GM13977 (cell line): ENCODE measurements at regions of chr2 and their contacts with region 1.

Region 1: GRCh38 chr2:38315707-38316333 is 61.3 kb downstream of the ATL2 start:
- DNase-seq: peak; percentile 49
- CTCF ChIP-seq: peak; percentile 67

Region 2: DNA sequence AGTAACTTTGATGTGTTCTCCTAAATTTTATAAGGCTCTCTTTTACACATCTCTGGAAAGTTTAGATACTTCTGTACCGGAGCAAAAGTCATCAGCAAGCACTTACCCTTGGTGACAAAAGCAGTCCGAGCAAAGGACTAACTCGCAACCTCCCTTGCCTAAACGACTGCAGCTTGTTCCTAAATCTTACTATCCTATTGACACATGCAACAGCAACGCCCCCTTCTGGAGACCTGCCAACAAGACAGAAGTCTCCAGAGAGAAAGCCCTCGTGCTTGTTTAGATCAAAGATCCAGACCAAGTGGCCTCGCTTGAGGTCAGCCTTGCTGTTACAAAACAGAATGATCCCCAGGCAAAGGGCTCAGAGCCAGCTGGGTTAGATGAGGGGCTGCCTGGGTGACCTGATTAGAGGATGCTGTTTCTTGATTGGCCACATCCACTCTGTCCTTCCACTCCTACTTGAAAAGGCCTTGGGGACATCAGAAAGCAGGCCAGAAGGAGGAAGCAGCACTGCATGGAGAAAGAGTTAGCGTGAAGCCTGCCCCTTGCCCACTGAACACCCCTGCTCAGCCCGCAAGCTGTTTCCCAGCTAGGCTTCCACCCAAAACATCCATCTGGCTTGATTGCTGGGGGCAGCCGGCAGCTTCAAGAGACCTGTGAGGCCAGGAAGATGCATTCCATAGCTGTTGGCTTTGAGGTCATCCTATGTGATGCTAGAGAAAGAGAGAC is 192.7 kb after region 1 on chr2:
- in situ Hi-C with region 1: loop called (anchors 10 kb)
- DNase-seq: peak; percentile 77
- CTCF ChIP-seq: peak; percentile 88

Region 3: GRCh38 chr2:38740851-38741731 is 425.3 kb after region 1 on chr2:
- in situ Hi-C with region 1: loop called (anchors 25 kb)
- DNase-seq: peak; percentile 35
- CTCF ChIP-seq: peak; percentile 43

Region 4: GRCh38 chr2:39568561-39569006 is 1252.8 kb after region 1 on chr2:
- in situ Hi-C with region 1: no loop called
- DNase-seq: no peak
- CTCF ChIP-seq: no peak